SK-N-SH (cell line): ENCODE measurements at regions of chr1 and their contacts with region 1.

Region 1: GRCh38 chr1:150053926-150054325 is 13.7 kb upstream of the VPS45 start:
- DNase-seq: no peak
- H3K4me3 ChIP-seq: no peak overlapping the region
- H3K27ac ChIP-seq: no peak overlapping the region
- H3K4me1 ChIP-seq: no peaks in the 10 kb centered on the region
- H3K27me3 ChIP-seq: no peaks in the 10 kb centered on the region
- CTCF ChIP-seq: no peak
- EP300 ChIP-seq: no peak
- RAD21 ChIP-seq: no peak

Region 2: GRCh38 chr1:149942207-149942606 is 111.7 kb before region 1 on chr1:
- CTCF ChIA-PET with region 1: interaction called, 10 read pairs
- POLR2A ChIA-PET with region 1: no interaction called
- DNase-seq: peak; percentile 82
- H3K4me3 ChIP-seq: no peak overlapping the region
- H3K27ac ChIP-seq: peak overlapping the region; percentile 4 to 53; a peak in 3 of 4 replicates
- H3K4me1 ChIP-seq: peaks cover 19 to 25% of the 10 kb centered on the region in 2 experiments
- H3K27me3 ChIP-seq: no peaks in the 10 kb centered on the region
- CTCF ChIP-seq: peak; percentile 43
- EP300 ChIP-seq: no peak
- RAD21 ChIP-seq: peak; percentile 63

Region 3: GRCh38 chr1:149972547-149972946 is 81.4 kb before region 1 on chr1:
- CTCF ChIA-PET with region 1: interaction called, 13 read pairs
- POLR2A ChIA-PET with region 1: no interaction called
- DNase-seq: no peak
- H3K4me3 ChIP-seq: no peak overlapping the region
- H3K27ac ChIP-seq: no peak overlapping the region
- H3K4me1 ChIP-seq: no peaks in the 10 kb centered on the region; a peak in 1 of 4 replicates
- H3K27me3 ChIP-seq: no peaks in the 10 kb centered on the region
- CTCF ChIP-seq: no peak
- EP300 ChIP-seq: no peak
- RAD21 ChIP-seq: no peak

Region 4: DNA sequence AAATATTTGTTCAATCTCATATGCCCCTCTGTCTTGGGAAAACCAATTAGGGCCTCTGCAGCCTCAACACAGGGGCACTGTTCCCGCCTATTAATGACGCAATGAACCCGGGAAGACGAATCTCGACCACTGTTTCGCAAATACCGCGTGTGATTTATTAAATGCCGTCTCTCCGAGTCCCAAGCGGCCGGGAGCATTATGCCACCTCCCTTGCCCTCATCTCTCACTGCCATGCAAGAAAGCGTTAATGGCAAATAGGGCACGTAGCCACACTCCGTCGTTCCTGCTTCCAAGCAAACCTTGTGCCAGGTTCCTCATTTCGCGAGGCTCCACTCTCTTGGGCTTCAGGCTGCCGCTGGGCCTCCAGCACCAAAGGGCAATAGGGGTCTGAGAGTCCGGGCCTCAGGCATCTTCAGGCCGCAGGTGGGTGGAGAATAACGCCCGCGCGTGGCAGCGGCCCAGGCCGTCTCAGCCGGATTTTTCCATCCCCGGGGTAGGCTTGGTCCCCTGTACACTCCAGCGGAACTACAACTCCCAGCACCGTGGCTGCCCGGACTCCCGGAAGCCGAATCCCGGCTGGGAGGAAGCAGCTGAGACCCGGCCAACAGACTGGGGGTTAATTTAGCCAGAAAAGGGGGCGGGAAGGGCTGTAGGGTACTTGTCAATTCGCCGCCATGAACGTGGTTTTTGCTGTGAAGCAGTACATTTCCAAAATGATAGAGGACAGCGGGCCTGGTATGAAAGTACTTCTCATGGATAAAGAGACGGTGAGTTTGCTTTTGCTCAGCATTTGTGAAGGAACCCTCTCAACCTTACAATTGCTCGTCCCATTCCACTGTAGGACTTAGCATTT is 13.5 kb after region 1 on chr1 and contains the start of gene VPS45:
- CTCF ChIA-PET with region 1: interaction called, 18 read pairs
- POLR2A ChIA-PET with region 1: no interaction called
- DNase-seq: peak; percentile 91
- H3K4me3 ChIP-seq: peak within 1 kb of the TSS; percentile 81 to 86
- H3K27ac ChIP-seq: peak within 1 kb of the TSS; percentile 90 to 98
- H3K4me1 ChIP-seq: peaks cover 4 to 21% of the 10 kb centered on the region in 2 experiments; a peak in 3 of 4 replicates
- H3K27me3 ChIP-seq: no peaks in the 10 kb centered on the region
- CTCF ChIP-seq: no peak
- EP300 ChIP-seq: peak in 1 of 2 experiments; percentile 13; a peak in 1 of 4 replicates
- RAD21 ChIP-seq: no peak
- polyA plus RNA-seq, gene VPS45: 31.5 and 48.7 TPM in 2 replicates

Region 5: DNA sequence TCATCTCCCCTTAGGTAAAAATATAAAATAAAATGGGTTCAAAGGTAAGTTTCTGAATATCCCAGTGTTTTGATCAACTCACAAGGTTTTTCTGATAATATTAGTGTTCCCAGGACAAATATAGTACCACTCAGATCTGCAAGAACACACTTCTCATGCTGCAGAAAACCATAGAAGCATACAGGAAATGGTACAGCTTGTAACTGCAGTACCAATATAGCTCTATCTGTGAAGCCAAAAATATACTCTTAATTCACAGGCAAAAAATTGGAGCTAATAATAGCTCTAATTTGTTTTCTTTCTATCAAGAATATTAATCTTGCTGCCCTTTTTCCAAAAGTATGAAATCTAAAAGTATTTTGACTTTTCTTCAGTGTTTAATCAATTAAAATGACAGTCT is 26.9 kb after region 1 on chr1:
- CTCF ChIA-PET with region 1: no interaction called
- POLR2A ChIA-PET with region 1: no interaction called
- DNase-seq: no peak
- H3K4me3 ChIP-seq: no peak overlapping the region
- H3K27ac ChIP-seq: no peak overlapping the region
- H3K4me1 ChIP-seq: peaks cover 0 to 4% of the 10 kb centered on the region in 2 experiments; a peak in 2 of 4 replicates
- H3K27me3 ChIP-seq: no peaks in the 10 kb centered on the region
- CTCF ChIP-seq: no peak
- EP300 ChIP-seq: no peak
- RAD21 ChIP-seq: no peak

Region 6: DNA sequence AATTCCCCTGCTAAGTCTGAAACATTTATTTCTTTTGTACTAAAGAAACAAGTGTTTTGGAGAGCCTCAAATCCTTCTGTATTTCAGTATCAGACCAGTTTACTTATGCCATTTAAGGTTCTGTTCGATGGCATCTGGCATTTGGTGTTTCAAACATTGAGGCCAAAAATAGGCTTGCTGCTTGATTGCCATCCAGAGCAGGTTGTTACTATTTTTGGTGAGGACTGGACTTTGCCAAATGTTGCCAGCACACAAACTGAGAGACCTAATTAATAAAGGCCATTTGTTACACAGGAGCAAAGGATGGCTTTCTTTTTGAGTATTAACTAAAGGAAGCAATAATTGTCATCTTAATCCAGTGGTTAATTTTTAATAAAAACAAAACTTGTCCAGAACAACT is 39.9 kb after region 1 on chr1:
- CTCF ChIA-PET with region 1: no interaction called
- POLR2A ChIA-PET with region 1: no interaction called
- DNase-seq: no peak
- H3K4me3 ChIP-seq: no peak overlapping the region
- H3K27ac ChIP-seq: 0 out of 4 replicates have a peak overlapping the region, but pooled peaks of 1 of the 2 experiments have one; percentile 23
- H3K4me1 ChIP-seq: peaks cover 0 to 5% of the 10 kb centered on the region in 2 experiments; a peak in 2 of 4 replicates
- H3K27me3 ChIP-seq: no peaks in the 10 kb centered on the region
- CTCF ChIP-seq: no peak
- EP300 ChIP-seq: no peak
- RAD21 ChIP-seq: no peak

Region 7: GRCh38 chr1:150372580-150372979 is 318.7 kb after region 1 on chr1:
- CTCF ChIA-PET with region 1: no interaction called
- POLR2A ChIA-PET with region 1: no interaction called
- DNase-seq: no peak
- H3K4me3 ChIP-seq: no peak overlapping the region
- H3K27ac ChIP-seq: no peak overlapping the region
- H3K4me1 ChIP-seq: peaks cover 0 to 14% of the 10 kb centered on the region in 2 experiments
- H3K27me3 ChIP-seq: no peaks in the 10 kb centered on the region
- CTCF ChIP-seq: no peak
- EP300 ChIP-seq: no peak
- RAD21 ChIP-seq: no peak